ENCODE measurements at regions of chr10 and their contacts with region 1.

Region 1: DNA sequence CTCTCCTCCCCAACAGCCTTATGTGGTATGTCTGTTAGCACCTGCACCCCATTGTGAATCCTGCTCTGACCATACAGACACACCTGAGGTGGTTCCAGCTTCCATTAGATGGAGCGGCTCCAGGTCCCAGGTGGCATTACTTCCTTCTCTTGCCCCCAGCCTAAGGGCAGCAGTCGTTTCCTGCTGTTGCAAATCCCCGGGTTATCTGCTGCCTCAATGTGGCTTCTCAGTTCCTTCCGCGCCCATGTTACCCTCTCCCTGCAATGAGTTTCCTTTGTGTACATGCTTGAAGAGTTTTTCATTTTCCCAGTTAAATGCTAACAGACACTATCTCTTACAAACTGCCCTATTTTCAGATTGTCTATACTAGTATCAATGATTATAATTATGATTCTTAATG is 62.8 kb upstream of the PRKCQ start:
- DNase-seq: peak; percentile 27
- H3K4me3 Mint-ChIP-seq: peak overlapping the region; percentile 36
- H3K27ac Mint-ChIP-seq: peak overlapping the region; percentile 71
- H3K4me1 Mint-ChIP-seq: peaks cover 48% of the 10 kb centered on the region
- H3K27me3 Mint-ChIP-seq: no peaks in the 10 kb centered on the region

Region 2: DNA sequence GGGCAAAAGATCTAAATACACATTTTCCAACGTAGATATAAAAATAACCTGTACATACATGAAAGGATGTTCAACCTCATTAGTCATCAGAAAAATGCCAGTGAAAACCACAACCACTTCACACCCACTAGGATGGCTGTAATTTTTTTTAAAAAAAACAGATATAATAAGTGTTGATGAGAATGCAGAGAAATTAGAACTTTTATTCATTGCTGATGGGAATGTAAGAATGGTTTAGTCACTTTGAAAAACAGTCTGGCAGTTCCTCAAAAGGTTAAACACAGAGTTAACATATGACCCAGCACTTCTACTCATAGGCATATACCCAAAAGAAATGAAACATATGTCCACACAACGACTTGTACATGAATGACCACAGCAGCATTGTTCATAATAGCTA is 30.5 kb before region 1 on chr10:
- CTCF ChIA-PET with region 1: interaction called, 12 read pairs
- POLR2A ChIA-PET with region 1: interaction called, 11 read pairs
- DNase-seq: no peak
- H3K4me3 Mint-ChIP-seq: no peak overlapping the region
- H3K27ac Mint-ChIP-seq: peak overlapping the region; percentile 61
- H3K4me1 Mint-ChIP-seq: peaks cover 88% of the 10 kb centered on the region
- H3K27me3 Mint-ChIP-seq: no peaks in the 10 kb centered on the region

Region 3: DNA sequence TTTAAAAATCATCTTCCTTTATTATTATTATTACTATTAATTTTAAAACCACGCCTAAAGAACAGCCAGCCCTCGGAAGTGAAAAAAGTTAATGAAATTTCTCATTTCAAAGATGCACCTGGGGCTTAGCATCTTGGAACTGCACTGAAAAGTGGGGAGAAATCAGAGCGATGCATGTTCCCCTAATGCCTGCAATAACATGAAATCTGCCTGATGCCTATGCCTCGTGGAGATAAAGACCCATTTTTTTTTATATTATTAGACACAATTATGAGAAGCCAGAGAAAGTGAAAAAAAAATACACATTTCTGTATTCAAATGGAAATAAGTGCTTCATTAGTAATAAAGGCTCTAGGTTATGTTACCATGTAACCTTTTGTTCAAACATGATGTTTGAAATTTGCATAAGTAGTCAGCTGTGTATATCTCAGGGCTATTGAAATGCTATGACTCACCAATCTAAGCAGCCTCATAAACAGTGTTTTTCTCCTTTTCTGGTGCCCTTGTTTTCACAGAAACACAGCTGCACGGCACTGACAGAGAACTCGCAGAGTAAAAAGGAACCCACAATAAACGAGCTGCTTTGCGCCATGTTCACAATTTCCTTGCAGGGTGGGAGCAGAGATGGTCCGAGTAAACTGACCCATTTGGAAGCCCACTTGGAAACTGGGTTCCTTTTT is 113.0 kb after region 1 on chr10:
- CTCF ChIA-PET with region 1: no interaction called
- POLR2A ChIA-PET with region 1: no interaction called
- DNase-seq: no peak
- H3K4me3 Mint-ChIP-seq: no peak overlapping the region
- H3K27ac Mint-ChIP-seq: no peak overlapping the region
- H3K4me1 Mint-ChIP-seq: no peaks in the 10 kb centered on the region
- H3K27me3 Mint-ChIP-seq: peaks cover 55% of the 10 kb centered on the region

Region 4: GRCh38 chr10:6778992-6779701 is 136.3 kb after region 1 on chr10:
- CTCF ChIA-PET with region 1: no interaction called
- POLR2A ChIA-PET with region 1: no interaction called
- DNase-seq: no peak
- H3K4me3 Mint-ChIP-seq: no peak overlapping the region
- H3K27ac Mint-ChIP-seq: no peak overlapping the region
- H3K4me1 Mint-ChIP-seq: no peaks in the 10 kb centered on the region
- H3K27me3 Mint-ChIP-seq: peaks cover 55% of the 10 kb centered on the region

Measured in activated CD4-positive, alpha-beta memory T cell treated with anti-CD3 and anti-CD28 coated beads, Interleukin-2, amount 10 ng/mL, durations not matched to agents 7 days and 5 days (primary cell).